Prostate gland (tissue), 2 donors: ENCODE measurements at regions of chr7 and their contacts with region 1.

Region 1: DNA sequence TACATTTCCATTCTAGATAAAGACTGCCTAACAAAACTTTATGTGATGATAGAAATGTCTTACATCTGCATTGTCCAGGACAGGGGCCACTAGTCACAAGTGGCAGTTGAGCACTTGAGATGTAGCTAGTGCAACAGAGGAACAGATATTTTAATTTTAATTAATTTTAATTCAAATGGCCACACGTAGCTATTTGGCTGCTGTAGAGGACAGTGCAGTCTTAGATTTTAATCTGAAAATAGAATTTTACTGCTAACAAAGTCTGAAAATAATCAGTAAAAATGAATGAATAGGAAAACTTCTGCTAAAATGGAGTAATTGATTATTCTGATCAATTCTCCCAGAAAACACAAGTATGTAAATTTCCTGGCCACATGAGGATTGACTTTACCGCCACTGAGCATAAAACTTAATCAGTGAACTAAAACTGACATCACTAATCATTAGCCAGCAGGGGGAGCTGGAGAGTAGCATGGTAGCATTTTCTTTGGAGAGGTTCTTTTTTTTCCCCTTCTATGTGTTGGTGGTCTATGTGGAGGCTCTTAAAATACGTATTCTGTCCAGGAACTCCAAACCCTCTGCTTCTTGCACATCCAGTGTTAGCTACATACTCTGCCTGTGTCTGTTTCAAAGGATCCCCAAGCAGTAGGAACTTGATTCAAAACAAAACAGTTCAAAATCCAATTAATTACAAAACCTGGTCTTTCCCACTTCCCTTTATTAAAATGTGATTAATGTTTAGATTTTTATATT is 52.1 kb downstream of the TSPAN12 start:
- DNase-seq: peak; percentile 50
- H3K4me3 ChIP-seq: no peak overlapping the region
- H3K27ac ChIP-seq: no peak overlapping the region
- H3K4me1 ChIP-seq: no peaks in the 10 kb centered on the region
- H3K27me3 ChIP-seq: no peaks in the 10 kb centered on the region
- CTCF ChIP-seq: peak; percentile 74 to 84 (median 76)
- POLR2A ChIP-seq: no peak

Region 2: DNA sequence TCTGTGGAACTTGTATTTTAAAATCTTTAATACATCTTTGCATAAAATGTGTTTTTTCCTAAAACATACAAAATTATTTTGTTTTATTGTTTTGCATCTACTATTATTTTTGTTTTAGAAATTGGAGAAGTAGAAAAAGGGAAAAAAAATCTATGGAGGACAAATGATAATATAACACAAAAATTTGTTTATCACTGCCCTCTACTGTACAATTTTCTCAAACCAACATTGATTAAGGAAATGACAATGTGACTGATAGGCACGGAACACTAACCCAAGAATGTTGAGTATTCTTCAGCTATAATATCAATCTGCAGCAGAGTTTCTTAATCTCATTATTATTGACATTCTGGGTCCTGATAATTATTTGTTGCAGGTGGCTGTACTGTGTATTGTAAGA is 135.3 kb after region 1 on chr7:
- intact Hi-C with region 1: loop called (anchors 2 kb)
- DNase-seq: no peak
- H3K4me3 ChIP-seq: no peak overlapping the region
- H3K27ac ChIP-seq: no peak overlapping the region
- H3K4me1 ChIP-seq: no peaks in the 10 kb centered on the region
- H3K27me3 ChIP-seq: no peaks in the 10 kb centered on the region
- CTCF ChIP-seq: peak in 3 of 4 experiments; percentile 24 to 57 (median 47)
- POLR2A ChIP-seq: no peak

Region 3: DNA sequence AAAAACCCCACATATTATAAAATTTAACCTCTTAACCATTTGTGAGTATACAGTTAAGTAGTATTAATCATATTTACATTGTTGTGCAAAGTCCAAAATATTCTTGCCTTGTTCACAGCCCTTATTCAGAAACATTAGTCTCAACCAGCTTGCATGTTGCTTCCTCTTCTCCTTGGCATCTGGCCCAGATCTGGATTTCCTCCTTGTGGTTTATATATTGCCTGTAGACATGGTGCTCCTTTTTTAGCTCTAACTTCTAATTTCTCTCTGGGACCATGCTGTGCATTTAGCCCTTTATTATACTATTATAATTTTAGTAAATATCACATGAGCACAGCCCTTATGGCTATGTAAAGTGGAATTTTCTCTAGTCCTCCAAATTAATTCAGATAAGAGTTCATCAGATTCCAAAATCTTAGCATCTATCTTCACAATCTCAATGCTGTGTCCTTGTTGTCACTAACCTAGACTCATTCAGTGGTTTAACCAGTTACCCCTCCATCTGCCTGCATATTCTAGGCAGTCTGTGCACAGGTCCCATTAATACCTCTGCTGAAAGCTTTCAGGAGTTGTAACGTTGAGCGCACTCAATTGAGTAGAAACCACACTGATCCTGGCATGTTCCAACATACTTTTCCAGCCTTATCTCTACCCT is 190.6 kb after region 1 on chr7:
- intact Hi-C with region 1: no loop called
- DNase-seq: peak; percentile 74
- H3K4me3 ChIP-seq: no peak overlapping the region
- H3K27ac ChIP-seq: no peak overlapping the region
- H3K4me1 ChIP-seq: no peaks in the 10 kb centered on the region
- H3K27me3 ChIP-seq: no peaks in the 10 kb centered on the region
- CTCF ChIP-seq: no peak
- POLR2A ChIP-seq: no peak

Region 4: DNA sequence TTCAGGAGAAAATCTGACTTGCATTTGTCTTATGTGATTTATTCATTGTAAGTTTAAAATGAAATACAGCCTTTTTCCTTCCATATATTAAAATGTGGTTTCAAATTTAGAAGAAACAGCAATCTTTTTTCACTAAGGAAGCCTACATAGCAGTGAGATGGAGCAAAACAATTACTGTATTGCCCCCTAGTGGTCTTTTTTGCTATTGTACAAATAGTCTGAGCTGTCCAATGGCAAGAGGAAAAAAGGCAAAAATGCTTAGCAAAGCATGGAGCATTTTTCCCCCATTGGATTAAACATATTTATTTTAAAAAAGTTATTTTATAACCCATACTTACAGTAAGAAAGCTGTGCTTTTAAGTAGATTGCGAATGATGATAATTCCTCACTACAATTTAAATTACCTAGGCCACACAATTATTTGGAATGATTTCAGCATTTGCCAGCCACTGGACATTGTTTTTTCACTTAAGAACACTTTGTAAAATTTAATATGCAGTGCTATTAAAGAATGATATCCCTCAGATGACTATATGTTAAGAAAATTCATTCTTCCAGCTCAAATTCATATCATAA is 302.2 kb after region 1 on chr7:
- intact Hi-C with region 1: loop called (anchors 5 kb)
- DNase-seq: no peak
- H3K4me3 ChIP-seq: no peak overlapping the region
- H3K27ac ChIP-seq: no peak overlapping the region
- H3K4me1 ChIP-seq: no peaks in the 10 kb centered on the region
- H3K27me3 ChIP-seq: no peaks in the 10 kb centered on the region
- CTCF ChIP-seq: peak; percentile 58 to 76 (median 68)
- POLR2A ChIP-seq: no peak